Aorta (tissue), 5 donors: ENCODE measurements at regions of chr9 and their contacts with region 1.

Region 1: GRCh38 chr9:114653556-114654159 is 3.9 kb downstream of the TEX53 start:
- DNase-seq: peak in 1 of 2 donors; percentile 80
- ATAC-seq: peak; percentile 89
- H3K4me3 ChIP-seq: no peak overlapping the region
- H3K27ac ChIP-seq: no peak overlapping the region
- H3K4me1 ChIP-seq: no peaks in the 10 kb centered on the region
- H3K27me3 ChIP-seq: no peaks in the 10 kb centered on the region

Region 2: DNA sequence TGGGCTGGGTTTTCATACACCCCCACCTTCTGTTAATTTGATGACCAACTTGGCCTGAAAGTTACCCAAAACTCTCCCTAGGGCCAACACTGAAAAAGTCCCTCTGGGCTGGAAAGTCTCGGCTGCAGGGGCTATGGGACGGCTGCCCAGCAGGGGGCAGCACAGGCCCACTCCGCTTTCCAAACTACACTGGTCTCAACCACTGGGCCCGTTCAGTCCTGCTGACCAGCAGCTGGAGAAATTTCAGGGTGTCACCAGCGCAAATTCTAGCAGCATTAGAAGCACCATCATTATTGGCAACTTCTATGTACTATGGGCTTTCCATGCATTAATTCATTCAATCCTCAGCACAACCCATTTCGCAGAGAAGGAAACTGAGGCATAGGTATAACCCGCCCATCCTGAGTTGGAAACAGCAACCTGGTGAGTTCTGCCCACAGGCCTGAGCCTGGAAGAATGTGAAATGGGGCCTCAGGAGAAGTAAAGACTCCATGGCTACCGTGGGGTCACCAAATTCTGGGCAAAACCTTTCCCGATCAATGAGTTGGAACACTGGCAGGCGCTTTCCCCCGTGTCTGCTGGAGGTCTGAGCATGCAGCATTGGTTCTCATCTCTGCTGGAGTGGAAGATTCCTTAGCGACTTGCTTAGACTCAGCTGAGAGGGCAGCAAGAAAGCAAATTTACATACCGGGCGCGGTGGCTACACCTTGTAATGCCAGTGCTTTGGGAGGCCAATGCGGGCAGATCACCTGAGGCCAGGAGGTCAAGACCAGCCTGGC is 314.3 kb before region 1 on chr9:
- intact Hi-C with region 1: loop called in 1 of 2 experiments (anchors 5 kb)
- DNase-seq: peak; percentile 66 to 86
- ATAC-seq: peak; percentile 69
- H3K4me3 ChIP-seq: no peak overlapping the region
- H3K27ac ChIP-seq: no peak overlapping the region
- H3K4me1 ChIP-seq: no peaks in the 10 kb centered on the region
- H3K27me3 ChIP-seq: no peaks in the 10 kb centered on the region

Region 3: DNA sequence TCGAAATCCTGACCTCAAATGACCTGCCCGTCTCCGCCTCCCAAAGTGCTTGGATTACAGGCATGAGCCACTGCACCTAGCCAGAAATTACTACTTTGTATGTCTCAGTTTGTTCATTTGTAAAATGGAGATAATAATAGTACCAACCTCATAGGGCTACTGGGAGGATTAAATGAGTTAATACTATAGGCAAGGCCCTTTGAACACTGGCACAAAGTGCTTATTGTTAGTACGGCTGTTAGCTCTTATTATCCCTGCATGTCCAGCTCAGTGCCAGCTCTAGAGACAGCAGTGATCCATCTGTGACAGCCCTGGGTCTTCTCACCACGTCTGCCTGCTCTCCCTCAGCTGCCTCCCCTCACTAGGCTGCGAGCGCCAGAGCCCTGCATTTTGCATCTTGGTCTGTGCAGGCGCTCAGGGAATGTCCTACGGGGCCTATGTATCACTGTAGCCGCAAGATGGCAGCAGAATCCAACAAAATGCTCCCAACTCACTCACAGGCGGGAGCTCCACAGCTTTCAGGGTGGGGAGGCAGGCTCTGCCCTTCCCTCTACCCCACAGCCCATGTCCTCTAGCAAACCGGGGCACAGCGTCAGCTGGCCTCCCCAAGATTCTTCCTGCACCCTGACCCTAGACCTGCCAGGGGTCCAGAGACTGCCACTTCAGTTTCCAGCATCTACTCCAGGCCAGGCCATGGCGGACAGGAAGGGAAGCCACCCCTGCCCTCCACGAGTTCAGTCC is 248.2 kb before region 1 on chr9:
- intact Hi-C with region 1: loop called (anchors 1 to 2 kb)
- DNase-seq: peak; percentile 85 to 87
- ATAC-seq: peak; percentile 91
- H3K4me3 ChIP-seq: no peak overlapping the region
- H3K27ac ChIP-seq: no peak overlapping the region
- H3K4me1 ChIP-seq: no peaks in the 10 kb centered on the region
- H3K27me3 ChIP-seq: no peaks in the 10 kb centered on the region

Region 4: GRCh38 chr9:114487607-114488300 is 165.9 kb before region 1 on chr9:
- intact Hi-C with region 1: loop called in 1 of 2 experiments (anchors 2 kb)
- DNase-seq: peak in 1 of 2 donors; percentile 58
- ATAC-seq: peak; percentile 73
- H3K4me3 ChIP-seq: no peak overlapping the region
- H3K27ac ChIP-seq: no peak overlapping the region
- H3K4me1 ChIP-seq: no peaks in the 10 kb centered on the region
- H3K27me3 ChIP-seq: no peaks in the 10 kb centered on the region

Region 5: DNA sequence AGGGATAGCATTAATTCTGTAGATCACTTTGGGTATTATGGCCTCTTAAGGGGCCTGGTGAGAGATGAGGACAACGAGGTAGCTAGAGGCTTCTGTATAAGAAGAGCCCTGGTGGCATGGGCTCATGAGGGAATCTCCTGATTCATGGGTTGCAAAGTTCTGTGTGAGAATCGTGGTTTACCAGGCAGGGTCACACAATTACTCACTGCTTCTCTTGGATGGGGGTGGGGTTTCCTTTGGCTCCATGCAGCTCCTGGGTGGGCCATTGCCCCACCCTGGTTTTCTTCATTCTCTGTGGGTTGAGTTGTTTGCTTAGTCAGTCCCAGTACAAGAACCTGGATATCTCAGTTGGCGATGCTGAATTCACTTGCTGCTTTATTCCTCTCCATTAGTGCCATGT is 183.1 kb after region 1 on chr9:
- intact Hi-C with region 1: no loop called
- DNase-seq: no peak
- ATAC-seq: no peak
- H3K4me3 ChIP-seq: no peak overlapping the region
- H3K27ac ChIP-seq: no peak overlapping the region
- H3K4me1 ChIP-seq: no peaks in the 10 kb centered on the region
- H3K27me3 ChIP-seq: peaks cover 0 to 1% of the 10 kb centered on the region in 2 donors

Region 6: GRCh38 chr9:115000217-115000639 is 346.6 kb after region 1 on chr9:
- intact Hi-C with region 1: no loop called
- DNase-seq: no peak
- ATAC-seq: no peak
- H3K4me3 ChIP-seq: no peak overlapping the region
- H3K27ac ChIP-seq: no peak overlapping the region
- H3K4me1 ChIP-seq: no peaks in the 10 kb centered on the region
- H3K27me3 ChIP-seq: no peaks in the 10 kb centered on the region